ENCODE measurements at regions of chr15 and their contacts with region 1.

Region 1: GRCh38 chr15:45457641-45458433 is 64.7 kb downstream of the SLC30A4 start:
- DNase-seq: peak; percentile 86
- H3K4me3 ChIP-seq: peak overlapping the region; percentile 36 to 65 (median 44)
- H3K27ac ChIP-seq: peak overlapping the region; percentile 58
- H3K4me1 ChIP-seq: peaks cover 12% of the 10 kb centered on the region
- H3K27me3 ChIP-seq: no peaks in the 10 kb centered on the region
- CTCF ChIP-seq: peak; percentile 45 to 63
- POLR2A ChIP-seq: no peak

Region 2: GRCh38 chr15:45198337-45199135 is 259.3 kb before region 1 on chr15:
- CTCF ChIA-PET with region 1: interaction called, 3 read pairs
- POLR2A ChIA-PET with region 1: no interaction called
- dilution Hi-C with region 1: no loop called
- intact Hi-C with region 1: loop called (anchors 2 kb)
- DNase-seq: peak; percentile 99
- H3K4me3 ChIP-seq: peak overlapping the region; percentile 56 to 82 (median 68)
- H3K27ac ChIP-seq: peak overlapping the region; percentile 43
- H3K4me1 ChIP-seq: peaks cover 8% of the 10 kb centered on the region
- H3K27me3 ChIP-seq: peaks cover 7% of the 10 kb centered on the region in 2 experiments
- CTCF ChIP-seq: peak; percentile 83 to 84
- POLR2A ChIP-seq: peak; percentile 83

Region 3: GRCh38 chr15:45386420-45386819 is 71.4 kb before region 1 on chr15:
- CTCF ChIA-PET with region 1: no interaction called
- POLR2A ChIA-PET with region 1: no interaction called
- dilution Hi-C with region 1: no loop called
- intact Hi-C with region 1: no loop called
- DNase-seq: no peak
- H3K4me3 ChIP-seq: no peak overlapping the region
- H3K27ac ChIP-seq: no peak overlapping the region
- H3K4me1 ChIP-seq: no peaks in the 10 kb centered on the region
- H3K27me3 ChIP-seq: peaks cover 15 to 42% of the 10 kb centered on the region in 2 experiments
- CTCF ChIP-seq: no peak
- POLR2A ChIP-seq: no peak

Region 4: GRCh38 chr15:45402162-45402954 is 55.5 kb before region 1 on chr15:
- CTCF ChIA-PET with region 1: interaction called, 12 read pairs
- POLR2A ChIA-PET with region 1: no interaction called
- dilution Hi-C with region 1: no loop called
- intact Hi-C with region 1: loop called (anchors 1 kb)
- DNase-seq: peak; percentile 98
- H3K4me3 ChIP-seq: peak overlapping the region; percentile 48 to 85 (median 76)
- H3K27ac ChIP-seq: peak overlapping the region; percentile 21
- H3K4me1 ChIP-seq: peaks cover 10% of the 10 kb centered on the region
- H3K27me3 ChIP-seq: no peaks in the 10 kb centered on the region
- CTCF ChIP-seq: no peak
- POLR2A ChIP-seq: peak; percentile 98

Region 5: GRCh38 chr15:45424429-45424828 is 33.4 kb before region 1 on chr15:
- CTCF ChIA-PET with region 1: interaction called, 118 read pairs
- POLR2A ChIA-PET with region 1: no interaction called
- dilution Hi-C with region 1: no loop called
- intact Hi-C with region 1: loop called (anchors 5 kb)
- DNase-seq: no peak
- H3K4me3 ChIP-seq: no peak overlapping the region
- H3K27ac ChIP-seq: no peak overlapping the region
- H3K4me1 ChIP-seq: no peaks in the 10 kb centered on the region
- H3K27me3 ChIP-seq: no peaks in the 10 kb centered on the region
- CTCF ChIP-seq: no peak
- POLR2A ChIP-seq: no peak

Region 6: DNA sequence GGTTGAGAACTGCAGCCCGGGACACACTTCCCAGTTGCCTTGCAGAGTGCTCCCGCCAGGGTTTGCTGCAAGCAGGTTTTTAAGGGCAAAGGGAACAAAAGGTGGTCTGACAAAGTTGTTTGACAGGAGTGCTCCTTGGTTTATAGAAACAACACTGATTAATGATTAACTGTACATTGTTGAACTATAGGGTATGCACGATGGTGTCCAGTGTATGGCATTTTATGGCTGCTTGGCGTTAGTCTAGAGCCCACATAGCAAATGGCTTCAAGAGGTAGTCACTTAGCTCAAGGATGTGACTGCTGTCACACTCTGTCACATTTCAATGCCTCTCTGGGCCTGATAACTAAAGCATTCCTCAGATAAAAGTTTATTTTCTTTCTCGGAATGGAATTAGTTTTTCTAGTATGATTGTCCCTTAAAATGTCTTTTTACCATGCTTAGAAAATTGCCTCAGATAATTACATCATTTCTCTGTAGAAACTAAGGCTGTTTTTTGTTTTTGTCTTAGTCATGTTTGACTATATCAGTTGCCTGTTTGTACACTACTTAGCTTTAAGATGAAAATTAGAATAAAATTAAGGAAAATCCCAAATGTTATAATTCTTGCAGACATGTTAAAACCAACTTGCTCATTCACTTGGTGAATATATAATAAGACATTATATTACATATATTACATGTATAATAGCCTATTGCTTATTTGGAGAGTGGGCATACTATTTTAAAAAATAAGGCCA is 18.1 kb before region 1 on chr15:
- CTCF ChIA-PET with region 1: interaction called, 15 read pairs
- POLR2A ChIA-PET with region 1: no interaction called
- dilution Hi-C with region 1: no loop called
- intact Hi-C with region 1: no loop called
- DNase-seq: no peak
- H3K4me3 ChIP-seq: no peak overlapping the region
- H3K27ac ChIP-seq: no peak overlapping the region
- H3K4me1 ChIP-seq: no peaks in the 10 kb centered on the region
- H3K27me3 ChIP-seq: peaks cover 0 to 2% of the 10 kb centered on the region in 2 experiments
- CTCF ChIP-seq: no peak
- POLR2A ChIP-seq: no peak

Region 7: GRCh38 chr15:45481135-45481534 is 23.3 kb after region 1 on chr15:
- CTCF ChIA-PET with region 1: no interaction called
- POLR2A ChIA-PET with region 1: no interaction called
- dilution Hi-C with region 1: no loop called
- intact Hi-C with region 1: no loop called
- DNase-seq: no peak
- H3K4me3 ChIP-seq: no peak overlapping the region
- H3K27ac ChIP-seq: no peak overlapping the region
- H3K4me1 ChIP-seq: no peaks in the 10 kb centered on the region
- H3K27me3 ChIP-seq: no peaks in the 10 kb centered on the region
- CTCF ChIP-seq: no peak
- POLR2A ChIP-seq: no peak

Region 8: GRCh38 chr15:45573961-45574629 is 116.3 kb after region 1 on chr15:
- CTCF ChIA-PET with region 1: interaction called, 7 read pairs
- POLR2A ChIA-PET with region 1: no interaction called
- dilution Hi-C with region 1: no loop called
- intact Hi-C with region 1: loop called (anchors 1 kb)
- DNase-seq: no peak
- H3K4me3 ChIP-seq: no peak overlapping the region
- H3K27ac ChIP-seq: no peak overlapping the region
- H3K4me1 ChIP-seq: no peaks in the 10 kb centered on the region
- H3K27me3 ChIP-seq: peaks cover 2 to 10% of the 10 kb centered on the region in 2 experiments
- CTCF ChIP-seq: peak; percentile 21 to 35
- POLR2A ChIP-seq: no peak

Region 9: DNA sequence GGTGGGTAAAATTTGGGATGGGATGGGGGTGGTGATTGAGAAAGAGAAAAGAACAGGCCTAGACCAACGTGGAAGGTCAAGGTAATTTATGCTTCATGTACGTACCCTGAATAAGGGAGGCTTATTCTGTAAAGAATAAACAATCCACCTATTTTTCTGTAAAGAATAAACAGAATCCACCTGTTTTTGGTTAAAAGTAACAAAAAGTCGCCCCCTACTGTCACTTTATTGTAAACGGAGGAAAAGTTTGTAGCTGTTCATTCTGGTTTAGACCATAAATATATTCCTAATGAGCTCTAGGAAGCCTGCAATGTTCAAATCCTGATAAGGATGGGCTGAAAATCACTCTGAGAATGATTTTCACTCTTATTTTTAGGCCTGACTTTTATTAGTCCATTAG is 153.5 kb after region 1 on chr15:
- CTCF ChIA-PET with region 1: interaction called, 145 read pairs
- POLR2A ChIA-PET with region 1: no interaction called
- dilution Hi-C with region 1: no loop called
- intact Hi-C with region 1: loop called (anchors 1 kb)
- DNase-seq: peak; percentile 33
- H3K4me3 ChIP-seq: no peak overlapping the region
- H3K27ac ChIP-seq: no peak overlapping the region
- H3K4me1 ChIP-seq: peaks cover 8% of the 10 kb centered on the region
- H3K27me3 ChIP-seq: no peaks in the 10 kb centered on the region
- CTCF ChIP-seq: peak; percentile 20 to 24
- POLR2A ChIP-seq: no peak

Region 10: GRCh38 chr15:45630917-45631691 is 173.3 kb after region 1 on chr15:
- CTCF ChIA-PET with region 1: no interaction called
- POLR2A ChIA-PET with region 1: no interaction called
- dilution Hi-C with region 1: no loop called
- intact Hi-C with region 1: no loop called
- DNase-seq: no peak
- H3K4me3 ChIP-seq: no peak overlapping the region
- H3K27ac ChIP-seq: no peak overlapping the region
- H3K4me1 ChIP-seq: peaks cover 13% of the 10 kb centered on the region
- H3K27me3 ChIP-seq: peaks cover 2 to 4% of the 10 kb centered on the region in 2 experiments
- CTCF ChIP-seq: no peak
- POLR2A ChIP-seq: no peak

Measured in endothelial cell of umbilical vein (primary cell).